Posterior vena cava (tissue), 2 donors: ENCODE measurements at regions of chr3 and their contacts with region 1.

Region 1: GRCh38 chr3:32143849-32144757 is 37.7 kb downstream of the GPD1L start:
- DNase-seq: no peak

Region 2: GRCh38 chr3:32018757-32019564 is 125.1 kb before region 1 on chr3:
- intact Hi-C with region 1: loop called (anchors 2 to 10 kb)
- DNase-seq: no peak